Common myeloid progenitor, CD34-positive (primary cell): ENCODE measurements at regions of chr19 and their contacts with region 1.

Region 1: GRCh38 chr19:45886427-45887199 is 672 bp upstream of the IRF2BP1 start:
- DNase-seq: peak; percentile 93 to 94 (median 94)
- H3K4me3 ChIP-seq: peak overlapping the region; percentile 54 to 89 (median 80)
- H3K27ac ChIP-seq: peak overlapping the region; percentile 87 to 96
- H3K4me1 ChIP-seq: peaks cover 0 to 44% (median 40%) of the 10 kb centered on the region in 4 experiments
- H3K27me3 ChIP-seq: no peaks in the 10 kb centered on the region

Region 2: DNA sequence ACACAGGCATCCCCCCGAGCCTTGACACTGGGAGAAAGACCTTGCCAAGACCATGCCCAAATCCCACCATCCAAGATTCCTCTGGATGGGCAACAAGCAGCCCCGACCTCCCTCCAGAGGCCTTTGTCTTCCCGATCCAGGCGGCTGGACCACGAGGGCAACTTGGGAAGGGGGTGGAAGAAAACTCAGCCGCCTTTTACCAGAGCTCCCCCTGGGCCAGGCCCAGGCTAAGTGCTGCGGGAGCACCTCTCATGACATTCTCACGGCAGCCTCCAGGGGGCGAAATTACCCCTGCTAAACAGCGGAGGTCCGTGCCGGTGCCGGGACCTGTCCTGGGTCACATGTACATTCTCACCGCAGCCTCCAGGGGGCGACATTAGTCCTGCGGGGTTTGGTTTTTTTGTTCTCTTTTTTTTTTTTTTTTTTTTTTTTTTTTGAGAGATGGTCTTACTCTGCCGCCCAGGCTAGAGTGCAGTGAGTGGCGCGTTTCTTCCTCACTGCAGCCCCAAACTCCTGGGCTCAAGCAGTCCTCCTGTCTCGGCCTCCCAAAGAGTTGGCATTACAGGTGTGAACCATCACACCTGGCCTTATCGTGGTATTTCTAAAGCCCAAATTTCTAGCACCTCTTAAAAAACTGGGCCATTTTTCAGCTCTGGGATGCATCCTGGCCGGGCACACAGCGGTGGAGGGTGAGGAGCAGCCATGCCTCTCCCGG is 69.4 kb before region 1 on chr19:
- CTCF ChIA-PET with region 1: interaction called, 13 read pairs
- POLR2A ChIA-PET with region 1: no interaction called
- DNase-seq: peak; percentile 96 to 98 (median 96)
- H3K4me3 ChIP-seq: no peak overlapping the region
- H3K27ac ChIP-seq: no peak overlapping the region
- H3K4me1 ChIP-seq: peaks cover 0 to 26% (median 25%) of the 10 kb centered on the region in 4 experiments
- H3K27me3 ChIP-seq: no peaks in the 10 kb centered on the region

Region 3: DNA sequence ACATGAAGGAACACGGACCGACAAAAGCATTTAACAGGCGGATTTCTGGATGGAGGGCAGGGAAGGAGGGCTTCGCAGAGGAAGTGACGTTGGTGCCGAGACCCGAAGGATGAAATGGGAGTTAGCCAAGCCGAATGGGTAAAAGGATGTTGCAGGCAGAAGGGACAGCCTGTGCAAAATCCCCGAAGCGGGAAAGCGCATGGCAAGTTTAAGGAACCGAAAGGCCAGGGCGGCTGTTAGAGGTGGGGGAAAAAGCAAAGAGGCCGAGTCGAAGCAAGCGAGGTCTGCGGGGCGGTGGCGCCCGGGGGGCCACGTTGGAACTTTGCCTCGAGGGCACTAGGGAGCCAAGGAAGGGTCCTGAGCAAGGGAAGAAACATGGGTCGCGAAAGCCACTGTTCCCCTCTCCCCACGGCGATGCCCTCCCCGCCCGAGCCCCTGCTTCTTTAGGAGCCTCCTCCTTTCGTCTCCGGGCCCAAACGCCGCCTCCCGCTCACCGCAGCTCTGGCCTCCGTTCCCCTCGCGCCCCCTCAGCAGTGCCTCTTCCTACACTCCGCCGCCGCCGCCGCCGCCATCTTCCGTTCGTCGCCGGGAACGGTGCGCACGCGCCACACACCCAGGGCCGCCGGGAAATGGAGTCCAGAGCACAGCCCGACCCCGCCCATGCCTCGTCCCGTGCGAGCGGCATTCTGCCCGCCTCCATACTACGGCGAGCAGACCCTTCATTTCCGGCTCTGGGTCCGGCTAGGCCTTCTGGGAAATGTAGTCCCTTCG is 23.9 kb before region 1 on chr19 and contains the start of gene SYMPK:
- CTCF ChIA-PET with region 1: interaction called, 132 read pairs
- POLR2A ChIA-PET with region 1: interaction called, 6 read pairs
- DNase-seq: peak; percentile 98 to 99 (median 99)
- H3K4me3 ChIP-seq: peak within 1 kb of the TSS; percentile 76 to 96 (median 86)
- H3K27ac ChIP-seq: peak within 1 kb of the TSS; percentile 85 to 86
- H3K4me1 ChIP-seq: peaks cover 3 to 27% (median 22%) of the 10 kb centered on the region in 4 experiments
- H3K27me3 ChIP-seq: peaks cover 0 to 2% (median 0%) of the 10 kb centered on the region in 5 experiments